Activated CD8-positive, alpha-beta T cell treated with anti-CD3 and anti-CD28 coated beads, Interleukin-2, amount 10 ng/mL, durations not matched to agents 7 days and 5 days (primary cell): ENCODE measurements at regions of chr3 and their contacts with region 1.

Region 1: DNA sequence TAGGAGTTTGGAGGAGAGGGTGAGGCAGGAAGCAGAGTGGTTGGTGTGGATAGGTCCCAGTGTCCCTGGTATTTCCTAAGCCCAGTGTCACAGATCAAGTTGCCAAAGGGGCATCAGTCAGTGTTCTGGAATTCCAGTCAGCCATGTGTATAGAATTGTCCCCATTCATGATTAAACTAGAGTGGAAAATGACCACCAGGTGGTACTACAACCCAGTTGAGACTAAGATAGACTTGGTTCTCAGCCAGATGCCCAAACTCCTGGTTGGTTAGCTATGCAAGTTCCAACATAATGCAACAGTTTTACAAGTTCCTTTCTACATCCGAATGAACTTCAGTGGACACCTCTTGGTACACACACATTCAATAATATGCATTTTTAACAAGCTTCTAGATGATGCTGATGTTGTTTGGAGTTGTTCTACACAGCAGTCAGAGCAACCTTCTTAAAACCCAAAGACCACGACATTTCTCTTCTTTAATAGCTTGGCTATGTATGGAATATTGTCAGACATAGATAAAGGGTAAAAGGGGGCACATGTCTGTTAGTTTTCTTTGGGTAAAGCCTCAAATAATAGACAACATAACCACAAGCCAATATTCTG is 8.4 kb upstream of the ATR start:
- DNase-seq: peak; percentile 42
- ATAC-seq: peak; percentile 81
- H3K4me3 Mint-ChIP-seq: no peak overlapping the region
- H3K27ac Mint-ChIP-seq: no peak overlapping the region
- H3K4me1 Mint-ChIP-seq: no peaks in the 10 kb centered on the region
- H3K27me3 Mint-ChIP-seq: peaks cover 35% of the 10 kb centered on the region

Region 2: GRCh38 chr3:142459096-142459495 is 127.8 kb before region 1 on chr3:
- CTCF ChIA-PET with region 1: no interaction called
- POLR2A ChIA-PET with region 1: no interaction called
- DNase-seq: no peak
- ATAC-seq: no peak
- H3K4me3 Mint-ChIP-seq: no peak overlapping the region
- H3K27ac Mint-ChIP-seq: no peak overlapping the region
- H3K4me1 Mint-ChIP-seq: no peaks in the 10 kb centered on the region
- H3K27me3 Mint-ChIP-seq: no peaks in the 10 kb centered on the region

Region 3: DNA sequence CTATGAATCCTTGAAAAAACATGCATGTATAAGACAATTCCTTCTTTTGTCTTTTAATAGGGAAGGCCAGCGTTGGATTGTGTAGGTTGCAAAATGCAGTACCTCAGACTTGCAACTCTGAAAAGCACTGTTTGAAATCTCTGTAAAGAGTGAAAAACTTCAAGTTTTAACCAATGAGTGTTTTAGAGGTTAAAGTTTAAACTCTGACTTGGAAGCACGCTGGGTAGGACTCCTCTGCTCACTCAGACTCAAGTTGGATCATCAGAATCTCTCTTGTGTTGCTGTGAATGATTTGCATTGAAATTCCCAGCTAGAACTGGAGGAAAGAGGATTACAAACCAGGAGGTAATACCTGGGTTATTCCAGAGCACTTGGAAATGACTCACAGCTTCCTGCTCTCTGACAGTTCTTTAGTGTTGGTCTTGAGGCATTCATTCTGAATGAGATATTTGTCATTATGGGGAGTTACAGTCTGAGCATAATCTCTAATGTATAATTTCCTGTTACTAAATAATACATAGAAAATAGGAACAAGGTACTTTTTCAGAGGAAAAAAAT is 58.4 kb after region 1 on chr3:
- CTCF ChIA-PET with region 1: no interaction called
- POLR2A ChIA-PET with region 1: no interaction called
- DNase-seq: no peak
- ATAC-seq: no peak
- H3K4me3 Mint-ChIP-seq: no peak overlapping the region
- H3K27ac Mint-ChIP-seq: no peak overlapping the region
- H3K4me1 Mint-ChIP-seq: no peaks in the 10 kb centered on the region
- H3K27me3 Mint-ChIP-seq: no peaks in the 10 kb centered on the region

Region 4: GRCh38 chr3:142993958-142994442 is 407.1 kb after region 1 on chr3:
- CTCF ChIA-PET with region 1: interaction called, 11 read pairs
- POLR2A ChIA-PET with region 1: no interaction called
- DNase-seq: peak; percentile 75
- ATAC-seq: peak; percentile 72
- H3K4me3 Mint-ChIP-seq: no peak overlapping the region
- H3K27ac Mint-ChIP-seq: no peak overlapping the region
- H3K4me1 Mint-ChIP-seq: no peaks in the 10 kb centered on the region
- H3K27me3 Mint-ChIP-seq: peaks cover 7% of the 10 kb centered on the region